ENCODE measurements at regions of chr6 and their contacts with region 1.

Region 1: DNA sequence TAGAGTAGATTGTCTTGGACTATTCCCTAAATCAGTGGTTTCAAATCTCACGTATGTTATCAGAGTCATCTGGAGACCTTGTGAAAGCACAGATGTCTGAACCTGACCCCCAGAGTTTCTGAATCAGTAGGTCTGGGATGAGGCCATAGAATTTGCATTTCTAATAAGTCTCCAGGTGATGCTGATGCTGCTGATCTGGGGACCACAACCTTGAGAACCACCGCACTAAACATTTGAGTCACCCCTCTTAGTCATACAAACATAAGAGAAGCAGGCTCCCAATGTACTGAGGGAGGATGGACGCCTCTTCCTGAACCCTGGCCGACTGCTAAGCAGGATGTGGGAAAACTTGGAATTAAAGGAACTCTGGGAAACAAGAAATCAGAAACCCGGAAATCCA is 187.8 kb upstream of the PRDM1 start:
- DNase-seq: no peak
- H3K4me3 Mint-ChIP-seq: no peak overlapping the region
- H3K27ac Mint-ChIP-seq: no peak overlapping the region
- H3K4me1 Mint-ChIP-seq: peaks cover 30% of the 10 kb centered on the region
- H3K27me3 Mint-ChIP-seq: no peaks in the 10 kb centered on the region

Region 2: GRCh38 chr6:104789770-104790190 is 1108.5 kb before region 1 on chr6:
- intact Hi-C with region 1: loop called (anchors 2 kb)
- DNase-seq: no peak
- H3K4me3 Mint-ChIP-seq: peak overlapping the region; percentile 52
- H3K27ac Mint-ChIP-seq: peak overlapping the region; percentile 97
- H3K4me1 Mint-ChIP-seq: peaks cover 40% of the 10 kb centered on the region
- H3K27me3 Mint-ChIP-seq: no peaks in the 10 kb centered on the region

Region 3: DNA sequence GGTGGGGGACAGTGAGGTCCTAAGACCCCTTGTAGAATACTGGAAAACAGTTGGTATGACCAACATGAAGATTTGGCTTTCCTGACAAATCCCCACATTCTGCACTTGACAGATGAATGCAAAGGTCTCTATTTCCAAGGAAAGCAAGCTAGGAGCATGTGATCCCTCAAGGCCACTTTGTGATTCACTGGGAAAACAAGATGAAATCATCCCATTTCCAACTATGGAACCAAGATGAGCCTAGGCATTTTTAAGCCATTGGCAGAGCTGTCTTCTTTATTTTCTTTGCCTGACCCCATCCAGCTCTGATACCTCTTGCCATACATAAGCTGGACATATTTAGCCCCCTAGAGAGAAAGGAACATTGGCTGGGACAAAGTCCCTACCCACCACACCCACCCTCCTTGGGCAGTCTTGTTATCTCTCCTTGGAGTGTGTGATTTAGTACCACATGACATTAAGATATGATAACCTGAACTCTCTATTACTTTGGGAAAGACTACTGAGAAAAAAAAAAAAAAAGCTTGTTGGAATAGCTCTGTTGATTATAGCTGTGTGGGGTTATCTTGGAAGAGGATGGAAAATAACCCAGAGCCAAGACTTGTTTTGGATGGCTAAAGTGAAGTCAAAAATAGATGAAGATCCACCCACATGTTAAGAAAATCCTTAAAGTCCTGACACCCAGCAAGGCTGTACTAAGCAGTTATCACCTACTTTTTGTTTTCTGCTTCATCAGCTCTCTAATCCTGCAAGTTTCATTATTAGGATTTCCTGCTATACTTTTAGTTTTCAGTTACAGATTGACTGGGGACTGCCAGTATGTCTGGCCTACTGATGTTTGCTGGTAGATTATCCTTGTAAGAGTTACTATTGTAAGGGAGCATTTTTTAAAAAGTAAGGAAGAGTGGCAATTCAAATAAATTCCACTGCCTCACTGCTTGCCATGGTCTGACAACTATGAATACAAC is 405.3 kb before region 1 on chr6:
- intact Hi-C with region 1: no loop called
- DNase-seq: no peak
- H3K4me3 Mint-ChIP-seq: no peak overlapping the region
- H3K27ac Mint-ChIP-seq: peak overlapping the region; percentile 38
- H3K4me1 Mint-ChIP-seq: peaks cover 30% of the 10 kb centered on the region
- H3K27me3 Mint-ChIP-seq: no peaks in the 10 kb centered on the region

Region 4: DNA sequence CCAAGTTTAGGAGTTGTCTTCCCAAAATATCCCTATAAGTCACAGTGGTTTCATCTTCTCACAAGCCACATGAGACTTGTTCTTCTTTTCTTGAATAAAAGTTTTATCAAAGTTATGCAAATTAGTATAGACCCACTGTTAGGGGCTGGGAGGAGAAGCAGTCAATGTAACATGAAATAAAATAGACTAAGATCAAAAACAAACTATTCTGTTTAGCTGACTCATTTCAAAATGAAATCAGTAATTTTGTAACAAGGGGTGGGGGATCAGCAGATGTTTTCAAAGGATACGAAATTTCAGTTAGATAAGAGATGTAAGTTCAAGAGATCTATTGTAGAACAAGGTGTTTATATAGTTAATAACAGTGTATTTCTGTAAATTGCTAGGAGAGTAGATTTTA is 151.8 kb before region 1 on chr6:
- intact Hi-C with region 1: loop called (anchors 2 kb)
- DNase-seq: no peak
- H3K4me3 Mint-ChIP-seq: no peak overlapping the region
- H3K27ac Mint-ChIP-seq: peak overlapping the region; percentile 47
- H3K4me1 Mint-ChIP-seq: peaks cover 59% of the 10 kb centered on the region
- H3K27me3 Mint-ChIP-seq: no peaks in the 10 kb centered on the region

Region 5: DNA sequence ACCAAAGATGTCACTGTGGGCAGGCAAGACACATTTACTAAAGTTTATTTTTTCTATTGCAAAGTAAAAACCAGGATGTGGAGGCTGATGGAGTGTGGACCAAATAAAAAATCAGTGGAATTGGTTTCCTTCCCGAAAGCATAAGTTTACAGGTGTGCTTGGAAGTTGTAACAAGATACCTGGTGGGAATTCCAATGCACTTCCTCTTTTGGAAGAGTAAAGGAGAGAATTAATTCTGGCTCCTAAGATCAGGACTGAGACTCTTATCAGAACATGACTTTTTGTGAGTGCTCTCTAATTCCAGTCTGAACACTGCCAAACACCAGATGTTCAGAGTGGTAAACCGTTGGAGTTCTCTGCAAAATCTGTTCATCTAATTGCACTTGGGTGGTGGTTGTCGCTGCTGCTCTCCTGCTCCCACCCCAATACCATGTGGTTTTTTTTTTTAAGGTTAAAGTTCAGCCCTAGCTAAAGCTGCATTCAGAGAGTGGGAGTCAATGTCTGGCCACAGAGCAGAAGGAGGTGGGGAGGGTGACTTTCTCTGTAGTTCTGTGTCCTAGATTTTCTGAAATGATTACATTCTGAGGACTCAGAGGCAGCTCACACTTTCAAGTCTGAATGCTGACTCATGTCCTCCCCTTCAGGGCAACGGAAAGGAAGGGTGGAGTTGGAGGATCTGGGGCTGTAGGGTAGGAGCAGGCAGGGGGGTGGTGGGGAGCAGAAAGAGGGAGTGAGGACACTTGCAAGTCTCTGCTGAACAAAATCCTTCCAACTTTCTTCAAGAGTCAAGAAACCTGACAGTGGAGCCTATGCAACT is 88.0 kb before region 1 on chr6:
- intact Hi-C with region 1: loop called (anchors 1 kb)
- DNase-seq: peak; percentile 70
- H3K4me3 Mint-ChIP-seq: peak overlapping the region; percentile 39
- H3K27ac Mint-ChIP-seq: peak overlapping the region; percentile 78
- H3K4me1 Mint-ChIP-seq: peaks cover 64% of the 10 kb centered on the region
- H3K27me3 Mint-ChIP-seq: no peaks in the 10 kb centered on the region

Region 6: GRCh38 chr6:105981002-105981887 is 83.0 kb after region 1 on chr6:
- intact Hi-C with region 1: loop called (anchors 2 kb)
- DNase-seq: peak; percentile 36
- H3K4me3 Mint-ChIP-seq: peak overlapping the region; percentile 74
- H3K27ac Mint-ChIP-seq: peak overlapping the region; percentile 85
- H3K4me1 Mint-ChIP-seq: peaks cover 56% of the 10 kb centered on the region
- H3K27me3 Mint-ChIP-seq: peaks cover 3% of the 10 kb centered on the region

Region 7: GRCh38 chr6:106085984-106086813 is 187.9 kb after region 1 on chr6 and contains the start of gene PRDM1:
- intact Hi-C with region 1: loop called (anchors 2 kb)
- DNase-seq: peak; percentile 78
- H3K4me3 Mint-ChIP-seq: peak within 1 kb of the TSS; percentile 89
- H3K27ac Mint-ChIP-seq: peak within 1 kb of the TSS; percentile 64
- H3K4me1 Mint-ChIP-seq: peaks cover 76% of the 10 kb centered on the region
- H3K27me3 Mint-ChIP-seq: peaks cover 5% of the 10 kb centered on the region
- total RNA-seq, gene PRDM1: 49.1 and 52.3 TPM in 2 replicates